ENCODE measurements at regions of chr9 and their contacts with region 1.

Region 1: GRCh38 chr9:96854073-96854876 is at the start of gene ZNF782:
- DNase-seq: peak; percentile 62 to 93 (median 83)
- ATAC-seq: peak; percentile 79
- H3K4me3 ChIP-seq: peak within 1 kb of the TSS; percentile 91 to 97
- H3K4me3 Mint-ChIP-seq: peak within 1 kb of the TSS; percentile 100
- H3K27ac ChIP-seq: peak within 1 kb of the TSS; percentile 52 to 74
- H3K27ac Mint-ChIP-seq: peak within 1 kb of the TSS; percentile 99
- H3K4me1 ChIP-seq: peaks cover 29% of the 10 kb centered on the region
- H3K4me1 Mint-ChIP-seq: peaks cover 52% of the 10 kb centered on the region
- H3K27me3 ChIP-seq: no peaks in the 10 kb centered on the region
- H3K27me3 Mint-ChIP-seq: peaks cover 4% of the 10 kb centered on the region
- CTCF ChIP-seq: no peak
- total RNA-seq, gene ZNF782: 2.6 to 3.6 TPM

Region 2: GRCh38 chr9:96574931-96575351 is 279.3 kb before region 1 on chr9:
- CTCF ChIA-PET with region 1: no interaction called
- POLR2A ChIA-PET with region 1: no interaction called
- intact Hi-C with region 1: no loop called
- DNase-seq: no peak
- ATAC-seq: no peak
- H3K4me3 ChIP-seq: no peak overlapping the region
- H3K4me3 Mint-ChIP-seq: no peak overlapping the region
- H3K27ac ChIP-seq: no peak overlapping the region
- H3K27ac Mint-ChIP-seq: no peak overlapping the region
- H3K4me1 ChIP-seq: no peaks in the 10 kb centered on the region
- H3K4me1 Mint-ChIP-seq: no peaks in the 10 kb centered on the region
- H3K27me3 ChIP-seq: no peaks in the 10 kb centered on the region
- H3K27me3 Mint-ChIP-seq: peaks cover 29% of the 10 kb centered on the region
- CTCF ChIP-seq: no peak

Region 3: GRCh38 chr9:96686548-96687335 is 167.5 kb before region 1 on chr9:
- CTCF ChIA-PET with region 1: no interaction called
- POLR2A ChIA-PET with region 1: no interaction called
- intact Hi-C with region 1: loop called (anchors 2 to 5 kb)
- DNase-seq: peak; percentile 47 to 91 (median 81)
- ATAC-seq: peak; percentile 96
- H3K4me3 ChIP-seq: peak overlapping the region; percentile 50 to 81
- H3K4me3 Mint-ChIP-seq: peak overlapping the region; percentile 87
- H3K27ac ChIP-seq: peak overlapping the region; percentile 35 to 53
- H3K27ac Mint-ChIP-seq: peak overlapping the region; percentile 89
- H3K4me1 ChIP-seq: no peaks in the 10 kb centered on the region
- H3K4me1 Mint-ChIP-seq: peaks cover 11% of the 10 kb centered on the region
- H3K27me3 ChIP-seq: no peaks in the 10 kb centered on the region
- H3K27me3 Mint-ChIP-seq: peaks cover 5% of the 10 kb centered on the region
- CTCF ChIP-seq: peak; percentile 28

Region 4: GRCh38 chr9:96875461-96876364 is 21.4 kb after region 1 on chr9:
- CTCF ChIA-PET with region 1: interaction called, 8 read pairs
- POLR2A ChIA-PET with region 1: interaction called, 6 read pairs
- intact Hi-C with region 1: loop called in 1 of 2 experiments (anchors 2 kb)
- DNase-seq: peak in 6 of 9 experiments; percentile 15 to 59 (median 32)
- ATAC-seq: peak; percentile 22
- H3K4me3 ChIP-seq: peak overlapping the region; percentile 44 to 45
- H3K4me3 Mint-ChIP-seq: peak overlapping the region; percentile 79
- H3K27ac ChIP-seq: no peak overlapping the region
- H3K27ac Mint-ChIP-seq: peak overlapping the region; percentile 75
- H3K4me1 ChIP-seq: peaks cover 20% of the 10 kb centered on the region
- H3K4me1 Mint-ChIP-seq: peaks cover 29% of the 10 kb centered on the region
- H3K27me3 ChIP-seq: peaks cover 18 to 20% of the 10 kb centered on the region in 2 experiments
- H3K27me3 Mint-ChIP-seq: peaks cover 46% of the 10 kb centered on the region
- CTCF ChIP-seq: no peak

Region 5: DNA sequence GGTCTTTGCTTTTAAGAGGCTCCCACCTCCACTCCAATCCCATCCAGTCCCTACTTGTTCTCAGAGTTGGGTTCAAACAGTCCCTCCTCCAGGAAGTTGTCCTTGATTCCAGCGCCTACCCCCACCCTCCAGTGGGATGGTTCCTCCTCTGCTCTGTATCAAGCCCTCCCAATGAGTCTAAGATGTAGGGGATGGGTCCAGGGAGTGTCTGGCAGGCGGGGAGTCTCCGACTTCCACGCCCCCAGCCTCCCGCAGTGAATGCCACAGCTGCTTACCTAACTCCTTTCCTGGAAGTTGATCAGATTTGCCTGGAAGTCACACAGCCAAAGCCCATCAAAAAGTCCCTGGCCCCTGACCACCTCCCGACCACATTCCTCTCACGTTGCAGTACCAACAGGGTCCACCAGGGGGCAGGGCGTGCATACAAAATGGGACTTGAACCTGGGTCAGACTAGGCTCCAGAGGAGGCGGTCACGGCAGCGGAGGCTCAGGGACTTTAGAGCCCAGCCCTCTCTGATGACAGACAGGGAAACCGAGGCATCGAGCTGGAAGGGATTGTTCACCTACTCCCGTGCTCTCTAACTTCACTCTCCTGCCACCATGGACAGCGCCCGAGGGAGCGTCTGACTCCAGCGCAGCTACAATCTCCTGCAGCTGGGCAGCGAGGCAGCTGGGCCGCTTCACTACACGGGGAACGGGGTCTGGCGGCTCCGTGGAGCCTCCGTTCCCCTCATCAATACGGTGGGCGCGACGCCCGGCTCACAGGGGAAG is 532.6 kb after region 1 on chr9:
- CTCF ChIA-PET with region 1: interaction called, 24 read pairs
- POLR2A ChIA-PET with region 1: no interaction called
- intact Hi-C with region 1: no loop called
- DNase-seq: peak; percentile 28 to 78 (median 70)
- ATAC-seq: peak; percentile 77
- H3K4me3 ChIP-seq: no peak overlapping the region
- H3K4me3 Mint-ChIP-seq: no peak overlapping the region
- H3K27ac ChIP-seq: no peak overlapping the region
- H3K27ac Mint-ChIP-seq: no peak overlapping the region
- H3K4me1 ChIP-seq: no peaks in the 10 kb centered on the region
- H3K4me1 Mint-ChIP-seq: peaks cover 4% of the 10 kb centered on the region
- H3K27me3 ChIP-seq: no peaks in the 10 kb centered on the region
- H3K27me3 Mint-ChIP-seq: peaks cover 12% of the 10 kb centered on the region
- CTCF ChIP-seq: peak; percentile 98

Region 6: GRCh38 chr9:97598461-97599288 is 744.4 kb after region 1 on chr9:
- CTCF ChIA-PET with region 1: interaction called, 18 read pairs
- POLR2A ChIA-PET with region 1: interaction called, 5 read pairs
- intact Hi-C with region 1: loop called in 1 of 2 experiments (anchors 1 kb)
- DNase-seq: peak; percentile 46 to 84 (median 72)
- ATAC-seq: peak; percentile 97
- H3K4me3 ChIP-seq: no peak overlapping the region
- H3K4me3 Mint-ChIP-seq: peak overlapping the region; percentile 59
- H3K27ac ChIP-seq: no peak overlapping the region
- H3K27ac Mint-ChIP-seq: no peak overlapping the region
- H3K4me1 ChIP-seq: no peaks in the 10 kb centered on the region
- H3K4me1 Mint-ChIP-seq: peaks cover 7% of the 10 kb centered on the region
- H3K27me3 ChIP-seq: no peaks in the 10 kb centered on the region
- H3K27me3 Mint-ChIP-seq: no peaks in the 10 kb centered on the region
- CTCF ChIP-seq: peak; percentile 77

Measured in CD8-positive, alpha-beta T cell (primary cell).